CD4-positive, alpha-beta memory T cell (primary cell): ENCODE measurements at regions of chr5 and their contacts with region 1.

Region 1: DNA sequence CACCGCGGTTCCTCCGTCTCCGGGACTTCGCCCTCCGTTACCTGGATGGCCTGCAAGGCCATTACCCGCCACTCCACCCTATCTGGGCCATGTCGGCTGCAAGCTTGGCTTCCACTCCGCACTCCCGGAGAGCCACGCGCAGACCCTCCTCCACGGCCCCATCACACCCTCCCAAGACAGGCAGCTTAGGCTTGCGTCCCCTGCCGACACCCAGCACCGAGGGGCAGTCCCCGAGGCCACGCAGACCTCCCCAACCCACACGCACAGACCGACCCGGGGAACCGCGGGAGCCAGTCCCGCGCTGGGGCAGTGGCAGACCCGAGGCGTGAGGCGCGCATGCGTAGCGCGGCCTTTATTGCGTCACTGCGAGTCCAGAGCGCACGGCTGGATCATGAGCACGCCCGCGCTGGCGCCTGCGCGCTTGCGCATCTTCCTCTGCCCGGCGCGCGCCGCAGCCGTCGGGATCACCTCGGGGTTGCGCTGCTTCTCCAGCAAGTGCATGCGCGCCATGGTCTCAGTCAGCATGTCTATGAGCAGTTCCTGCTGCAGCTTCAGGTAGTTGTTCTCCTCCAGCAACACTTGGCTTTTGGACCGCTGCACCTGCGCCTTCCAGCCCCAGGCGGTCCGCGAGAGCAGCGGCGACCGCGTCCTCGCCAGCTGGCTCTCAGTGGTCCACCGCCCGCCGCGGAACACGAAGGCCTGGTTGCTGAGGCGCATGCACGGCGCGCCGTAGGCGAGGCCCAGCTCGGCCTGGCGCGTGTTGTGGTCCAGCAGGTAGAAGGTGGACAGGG is 2.4 kb downstream of the CBY3 start:
- DNase-seq: peak; percentile 93 to 95 (median 93)
- H3K4me3 ChIP-seq: peak overlapping the region; percentile 73 to 98
- H3K4me3 Mint-ChIP-seq: peak overlapping the region; percentile 96 to 99 (median 96)
- H3K27ac ChIP-seq: peak overlapping the region; percentile 83
- H3K27ac Mint-ChIP-seq: peak overlapping the region; percentile 95 to 98 (median 98)
- H3K4me1 ChIP-seq: peaks cover 28% of the 10 kb centered on the region
- H3K4me1 Mint-ChIP-seq: peaks cover 21 to 51% (median 31%) of the 10 kb centered on the region in 4 donors
- H3K27me3 ChIP-seq: no peaks in the 10 kb centered on the region
- H3K27me3 Mint-ChIP-seq: no peaks in the 10 kb centered on the region

Region 2: GRCh38 chr5:179550511-179551230 is 127.7 kb before region 1 on chr5 and contains the start of gene RUFY1:
- CTCF ChIA-PET with region 1: no interaction called
- POLR2A ChIA-PET with region 1: interaction called, 10 read pairs
- intact Hi-C with region 1: no loop called
- DNase-seq: peak; percentile 81 to 92 (median 87)
- H3K4me3 ChIP-seq: peak within 1 kb of the TSS; percentile 78 to 91
- H3K4me3 Mint-ChIP-seq: peak within 1 kb of the TSS; percentile 94 to 99 (median 96)
- H3K27ac ChIP-seq: peak within 1 kb of the TSS; percentile 66
- H3K27ac Mint-ChIP-seq: peak within 1 kb of the TSS; percentile 94 to 99 (median 97)
- H3K4me1 ChIP-seq: peaks cover 30% of the 10 kb centered on the region
- H3K4me1 Mint-ChIP-seq: peaks cover 17 to 45% (median 27%) of the 10 kb centered on the region in 4 donors
- H3K27me3 ChIP-seq: no peaks in the 10 kb centered on the region
- H3K27me3 Mint-ChIP-seq: no peaks in the 10 kb centered on the region
- total RNA-seq, gene RUFY1: 59.1 to 61.5 TPM

Region 3: GRCh38 chr5:179732417-179732917 is 54.0 kb after region 1 on chr5 and contains the start of gene MAML1:
- CTCF ChIA-PET with region 1: interaction called, 7 read pairs
- POLR2A ChIA-PET with region 1: interaction called, 31 read pairs
- intact Hi-C with region 1: loop called (anchors 1 kb)
- DNase-seq: peak; percentile 99 to 100 (median 99)
- H3K4me3 ChIP-seq: peak within 1 kb of the TSS; percentile 53 to 62
- H3K4me3 Mint-ChIP-seq: peak within 1 kb of the TSS; percentile 92 to 97 (median 95)
- H3K27ac ChIP-seq: peak within 1 kb of the TSS; percentile 96
- H3K27ac Mint-ChIP-seq: peak within 1 kb of the TSS; percentile 92 to 99 (median 96)
- H3K4me1 ChIP-seq: peaks cover 44% of the 10 kb centered on the region
- H3K4me1 Mint-ChIP-seq: peaks cover 25 to 51% (median 37%) of the 10 kb centered on the region in 4 donors
- H3K27me3 ChIP-seq: no peaks in the 10 kb centered on the region
- H3K27me3 Mint-ChIP-seq: no peaks in the 10 kb centered on the region
- total RNA-seq, gene MAML1: 52.4 to 56.5 TPM

Region 4: GRCh38 chr5:179821581-179822432 is 143.4 kb after region 1 on chr5:
- CTCF ChIA-PET with region 1: no interaction called
- POLR2A ChIA-PET with region 1: interaction called, 12 read pairs
- intact Hi-C with region 1: no loop called
- DNase-seq: peak; percentile 89 to 92 (median 90)
- H3K4me3 ChIP-seq: peak overlapping the region; percentile 50 to 83
- H3K4me3 Mint-ChIP-seq: peak overlapping the region; percentile 93 to 98 (median 96)
- H3K27ac ChIP-seq: peak overlapping the region; percentile 99
- H3K27ac Mint-ChIP-seq: peak overlapping the region; percentile 96 to 99 (median 97)
- H3K4me1 ChIP-seq: peaks cover 52% of the 10 kb centered on the region
- H3K4me1 Mint-ChIP-seq: peaks cover 28 to 76% (median 46%) of the 10 kb centered on the region in 4 donors
- H3K27me3 ChIP-seq: no peaks in the 10 kb centered on the region
- H3K27me3 Mint-ChIP-seq: peaks cover 0 to 1% of the 10 kb centered on the region in 2 donors

Region 5: GRCh38 chr5:180090098-180090768 is 411.8 kb after region 1 on chr5:
- CTCF ChIA-PET with region 1: no interaction called
- POLR2A ChIA-PET with region 1: no interaction called
- intact Hi-C with region 1: loop called (anchors 2 kb)
- DNase-seq: peak; percentile 69 to 85 (median 81)
- H3K4me3 ChIP-seq: peak overlapping the region; percentile 48 to 52
- H3K4me3 Mint-ChIP-seq: peak overlapping the region; percentile 74 to 90 (median 87)
- H3K27ac ChIP-seq: peak overlapping the region; percentile 49
- H3K27ac Mint-ChIP-seq: peak overlapping the region; percentile 69 to 91 (median 80)
- H3K4me1 ChIP-seq: peaks cover 13% of the 10 kb centered on the region
- H3K4me1 Mint-ChIP-seq: peaks cover 11 to 29% (median 16%) of the 10 kb centered on the region in 4 donors
- H3K27me3 ChIP-seq: no peaks in the 10 kb centered on the region
- H3K27me3 Mint-ChIP-seq: peaks cover 1 to 5% of the 10 kb centered on the region in 2 donors

Region 6: DNA sequence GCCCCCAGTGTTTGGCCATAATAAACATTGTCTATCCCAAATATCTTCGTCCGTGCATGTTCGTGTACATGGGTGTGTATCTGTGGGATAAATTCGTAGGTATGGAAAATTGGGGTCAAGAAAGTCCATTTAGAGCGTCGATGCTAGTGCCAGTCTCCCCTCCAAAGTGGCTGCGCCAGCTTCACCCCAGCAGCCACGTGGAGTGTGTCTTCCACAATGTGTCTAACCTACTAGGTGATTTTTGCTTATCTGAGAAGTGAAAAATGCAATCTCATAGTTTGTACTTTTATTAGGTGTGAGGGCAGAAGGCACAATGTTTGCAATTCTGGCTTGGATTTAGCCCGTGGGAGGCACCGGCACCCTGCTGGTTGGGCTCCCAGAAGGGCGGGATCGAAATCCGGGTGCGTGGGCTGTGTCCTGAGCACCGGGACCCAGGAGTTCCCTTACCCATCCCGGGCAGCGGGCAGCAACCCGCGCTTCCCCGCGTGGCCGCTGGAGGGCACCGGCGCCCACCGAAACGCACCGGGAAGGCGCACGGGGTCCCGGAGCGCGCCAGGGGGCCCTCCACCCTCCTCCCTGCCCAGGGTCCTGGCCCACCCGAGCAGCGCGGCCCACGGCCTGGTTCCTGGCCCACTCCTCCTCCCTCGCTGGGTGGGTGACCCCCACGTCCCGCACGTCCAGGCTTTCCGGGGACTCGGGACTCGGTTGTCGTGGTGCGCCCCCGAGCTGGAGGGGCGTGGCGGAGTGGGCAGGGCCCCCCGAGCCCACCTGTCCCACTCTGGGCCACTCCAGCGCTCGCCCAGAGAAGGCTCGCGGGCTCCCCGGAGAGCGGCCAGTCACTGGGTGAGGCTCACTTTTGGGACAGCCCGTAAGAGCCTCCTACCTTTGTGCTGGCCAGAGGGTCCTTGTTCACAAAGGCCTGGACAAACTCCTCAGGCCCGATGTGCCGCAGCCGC is 448.6 kb after region 1 on chr5:
- CTCF ChIA-PET with region 1: no interaction called
- POLR2A ChIA-PET with region 1: no interaction called
- intact Hi-C with region 1: no loop called
- DNase-seq: peak in 1 of 5 donors; percentile 19
- H3K4me3 ChIP-seq: no peak overlapping the region
- H3K4me3 Mint-ChIP-seq: no peak overlapping the region
- H3K27ac ChIP-seq: no peak overlapping the region
- H3K27ac Mint-ChIP-seq: no peak overlapping the region
- H3K4me1 ChIP-seq: no peaks in the 10 kb centered on the region
- H3K4me1 Mint-ChIP-seq: no peaks in the 10 kb centered on the region
- H3K27me3 ChIP-seq: no peaks in the 10 kb centered on the region
- H3K27me3 Mint-ChIP-seq: peaks cover 5 to 8% of the 10 kb centered on the region in 2 donors